ENCODE measurements at regions of chr9 and their contacts with region 1.

Region 1: DNA sequence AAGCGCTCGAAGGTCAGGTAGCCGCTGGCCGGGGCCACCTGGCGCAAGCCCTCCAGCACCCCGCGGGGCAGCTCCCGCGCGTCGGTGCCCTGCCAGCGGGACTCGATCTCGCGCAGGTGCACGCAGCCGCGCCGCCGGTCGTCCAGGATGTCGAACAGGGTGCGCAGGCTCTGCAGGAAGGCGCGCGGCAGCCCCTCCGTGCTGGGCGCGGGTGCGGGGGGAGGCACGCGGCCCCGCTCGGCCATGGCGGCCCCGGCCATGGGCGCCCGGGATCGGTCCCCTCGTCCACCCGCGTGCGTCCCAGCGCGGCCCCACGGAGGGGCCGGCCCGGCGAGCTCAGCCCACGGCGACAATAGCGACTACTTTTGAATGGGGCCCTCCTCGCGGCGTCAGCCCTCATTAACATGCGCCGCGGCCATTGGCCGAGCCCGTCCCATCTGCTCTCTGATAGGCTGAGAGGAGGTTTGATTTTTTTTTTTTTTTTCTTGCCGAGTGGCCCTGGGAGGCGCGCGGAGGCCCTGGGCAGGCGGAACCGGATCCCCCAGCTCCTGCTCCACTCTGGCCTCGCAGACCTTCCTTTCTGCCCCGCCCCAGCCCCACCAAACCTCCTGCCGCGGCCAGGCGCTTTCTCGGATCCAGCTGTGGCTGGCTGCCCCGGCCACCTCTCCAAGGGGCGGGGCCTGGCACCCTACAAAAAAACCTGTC is at the start of gene SAPCD2:
- DNase-seq: peak; percentile 86 to 88
- ATAC-seq: peak; percentile 73 to 89
- H3K4me3 ChIP-seq: peak within 1 kb of the TSS; percentile 52
- H3K27ac ChIP-seq: peak within 1 kb of the TSS; percentile 68 to 88
- H3K4me1 ChIP-seq: peaks cover 27% of the 10 kb centered on the region
- CTCF ChIP-seq: no peak; the same call in 2 of the 3 replicates
- EP300 ChIP-seq: no peak
- POLR2A ChIP-seq: peak; percentile 29; the same call in 1 of the 2 replicates
- RAD21 ChIP-seq: no peak
- polyA plus RNA-seq, gene SAPCD2: 6.5 and 6.9 TPM in 2 replicates

Region 2: GRCh38 chr9:137086531-137087408 is 16.4 kb after region 1 on chr9 and contains the start of gene MAN1B1:
- CTCF ChIA-PET with region 1: interaction called, 321 read pairs
- POLR2A ChIA-PET with region 1: interaction called, 18 read pairs
- DNase-seq: peak; percentile 94 to 100
- ATAC-seq: peak; percentile 79 to 89
- H3K4me3 ChIP-seq: peak within 1 kb of the TSS; percentile 88
- H3K27ac ChIP-seq: peak within 1 kb of the TSS; percentile 95 to 100
- H3K4me1 ChIP-seq: peaks cover 41% of the 10 kb centered on the region
- CTCF ChIP-seq: no peak
- EP300 ChIP-seq: no peak
- POLR2A ChIP-seq: peak; percentile 89
- RAD21 ChIP-seq: no peak
- polyA plus RNA-seq, gene MAN1B1: 31.7 and 47.8 TPM in 2 replicates

Measured in A549 (cell line).